GM23248 (cell line): ENCODE measurements at regions of chr18 and their contacts with region 1.

Region 1: DNA sequence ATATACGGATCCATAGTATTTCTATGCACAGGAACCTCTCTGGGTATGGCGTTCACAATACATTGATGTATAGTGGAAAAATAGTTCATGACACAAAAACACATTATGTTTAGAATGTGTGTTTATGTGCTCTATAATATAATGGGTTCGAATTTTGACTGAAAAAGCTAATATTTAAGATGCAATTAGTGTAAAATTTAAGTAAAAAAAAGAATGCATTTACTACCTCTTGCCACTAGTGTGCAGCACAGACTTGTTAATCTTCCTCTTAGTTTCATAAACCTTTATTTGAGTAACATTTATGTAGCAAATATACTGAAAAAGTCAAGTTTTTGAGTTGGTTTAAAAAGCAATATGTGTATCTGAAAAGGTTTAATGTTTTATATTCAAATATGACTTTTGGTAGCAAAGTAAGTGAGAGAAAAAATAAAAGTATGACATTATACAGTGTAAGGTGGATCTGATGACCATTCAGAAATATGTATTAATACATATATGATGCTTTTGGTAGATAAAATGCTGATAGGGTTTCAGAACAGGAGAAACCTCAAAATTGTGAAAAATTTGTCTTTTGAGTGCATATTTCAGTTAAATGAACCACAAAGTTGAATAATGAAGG is 49.4 kb downstream of the CCDC102B start:
- DNase-seq: peak; percentile 57
- H3K4me3 ChIP-seq: no peak overlapping the region
- H3K27ac ChIP-seq: no peak overlapping the region
- H3K4me1 ChIP-seq: no peaks in the 10 kb centered on the region
- H3K27me3 ChIP-seq: no peaks in the 10 kb centered on the region

Region 2: DNA sequence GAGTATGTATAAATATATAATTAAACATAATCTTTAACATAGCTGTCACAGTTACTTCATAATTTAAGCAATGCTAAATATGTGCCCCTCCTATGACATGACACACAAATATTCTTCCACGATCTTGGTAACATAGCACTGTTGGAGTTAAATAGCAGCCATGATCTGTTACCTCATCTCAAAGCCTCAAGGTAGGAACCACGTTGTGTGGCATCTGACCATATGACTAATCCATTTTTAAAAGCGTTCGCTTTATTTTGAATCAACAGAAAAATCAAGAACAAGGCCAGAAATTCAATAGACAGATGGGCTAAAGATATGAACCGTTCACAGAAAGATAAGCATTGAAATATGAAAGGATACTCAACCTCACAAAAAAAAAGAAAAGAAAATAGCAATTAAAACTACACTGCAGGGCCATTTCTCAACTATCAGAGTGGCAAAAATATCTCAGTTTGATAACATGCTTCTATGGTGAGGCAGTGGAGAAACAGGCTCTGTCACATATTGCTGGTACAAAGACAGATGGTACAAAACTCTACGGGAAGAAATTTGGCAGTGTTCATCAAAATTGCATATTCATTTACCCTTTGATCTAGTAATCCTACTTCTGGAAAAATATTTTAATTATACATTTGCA is 238.4 kb before region 1 on chr18:
- in situ Hi-C with region 1: no loop called
- DNase-seq: no peak
- H3K4me3 ChIP-seq: no peak overlapping the region
- H3K27ac ChIP-seq: no peak overlapping the region
- H3K4me1 ChIP-seq: no peaks in the 10 kb centered on the region
- H3K27me3 ChIP-seq: no peaks in the 10 kb centered on the region

Region 3: DNA sequence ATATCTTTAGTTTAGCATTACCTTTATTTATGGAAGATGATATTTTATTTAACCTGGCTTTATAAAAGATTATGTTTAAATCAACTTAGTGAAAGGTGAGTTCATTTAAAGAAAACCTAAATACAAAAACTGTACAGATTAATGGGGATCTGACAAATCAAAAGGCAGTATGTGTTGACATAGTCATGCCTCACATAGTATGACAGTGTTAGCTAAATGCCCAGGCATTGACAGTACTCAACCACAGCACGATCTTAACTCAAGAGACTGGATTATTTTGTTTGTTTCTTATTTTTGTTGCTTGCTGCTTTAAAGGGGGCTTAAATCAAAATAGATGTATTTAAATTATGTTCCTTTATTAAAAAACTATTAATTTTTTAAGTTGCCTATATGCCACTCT is 561.2 kb after region 1 on chr18:
- in situ Hi-C with region 1: no loop called
- DNase-seq: no peak
- H3K4me3 ChIP-seq: no peak overlapping the region
- H3K27ac ChIP-seq: no peak overlapping the region
- H3K4me1 ChIP-seq: no peaks in the 10 kb centered on the region
- H3K27me3 ChIP-seq: no peaks in the 10 kb centered on the region

Region 4: DNA sequence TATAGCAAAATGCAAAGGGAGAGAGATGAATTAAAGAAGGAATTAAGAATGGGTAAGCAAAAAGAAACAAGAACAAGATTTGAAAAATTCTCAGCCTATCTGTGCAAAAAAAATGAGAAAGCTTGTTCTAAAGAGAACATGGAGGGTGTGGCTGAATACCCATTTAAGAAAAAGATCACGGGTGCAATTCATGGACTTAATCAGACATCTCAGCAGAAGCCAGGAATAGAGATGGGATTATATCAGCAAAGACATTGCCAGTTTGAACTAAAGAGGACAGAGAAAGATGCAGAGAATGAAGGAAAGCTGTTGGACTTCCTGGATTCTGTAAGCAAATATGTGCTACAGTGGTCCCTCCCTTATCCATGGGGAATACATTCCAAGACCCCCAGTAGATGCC is 1242.5 kb after region 1 on chr18:
- in situ Hi-C with region 1: loop called (anchors 10 kb)
- DNase-seq: no peak
- H3K4me3 ChIP-seq: no peak overlapping the region
- H3K27ac ChIP-seq: no peak overlapping the region
- H3K4me1 ChIP-seq: no peaks in the 10 kb centered on the region
- H3K27me3 ChIP-seq: no peaks in the 10 kb centered on the region